Naive thymus-derived CD4-positive, alpha-beta T cell (primary cell): ENCODE measurements at regions of chr11 and their contacts with region 1.

Region 1: GRCh38 chr11:75492181-75492820 is 33.4 kb downstream of the GDPD5 start:
- DNase-seq: peak in 7 of 9 donors; percentile 12 to 52 (median 31)
- ATAC-seq: peak; percentile 90
- H3K4me3 ChIP-seq: no peak overlapping the region
- H3K4me3 Mint-ChIP-seq: peak overlapping the region; percentile 18 to 76 (median 61)
- H3K27ac ChIP-seq: peak overlapping the region; percentile 4
- H3K27ac Mint-ChIP-seq: peak overlapping the region in 8 of 9 donors; percentile 33 to 83 (median 74)
- H3K4me1 ChIP-seq: peaks cover 12 to 14% of the 10 kb centered on the region in 2 donors
- H3K4me1 Mint-ChIP-seq: peaks cover 5 to 23% (median 17%) of the 10 kb centered on the region in 7 donors
- H3K27me3 ChIP-seq: no peaks in the 10 kb centered on the region
- H3K27me3 Mint-ChIP-seq: no peaks in the 10 kb centered on the region

Region 2: GRCh38 chr11:75508044-75508561 is 15.8 kb after region 1 on chr11:
- CTCF ChIA-PET with region 1: no interaction called
- POLR2A ChIA-PET with region 1: no interaction called
- intact Hi-C with region 1: loop called in 1 of 2 experiments (anchors 2 kb)
- DNase-seq: peak in 6 of 9 donors; percentile 34 to 68 (median 54)
- ATAC-seq: peak; percentile 92
- H3K4me3 ChIP-seq: no peak overlapping the region
- H3K4me3 Mint-ChIP-seq: peak overlapping the region in 8 of 10 donors; percentile 28 to 74 (median 52)
- H3K27ac ChIP-seq: peak overlapping the region; percentile 17
- H3K27ac Mint-ChIP-seq: peak overlapping the region; percentile 23 to 96 (median 82)
- H3K4me1 ChIP-seq: peaks cover 20 to 22% of the 10 kb centered on the region in 2 donors
- H3K4me1 Mint-ChIP-seq: peaks cover 13 to 22% (median 17%) of the 10 kb centered on the region in 7 donors
- H3K27me3 ChIP-seq: no peaks in the 10 kb centered on the region
- H3K27me3 Mint-ChIP-seq: peaks cover 0 to under 1% (median 0%) of the 10 kb centered on the region in 5 donors